GM12878 (cell line): ENCODE measurements at regions of chr17 and their contacts with region 1.

Region 1: DNA sequence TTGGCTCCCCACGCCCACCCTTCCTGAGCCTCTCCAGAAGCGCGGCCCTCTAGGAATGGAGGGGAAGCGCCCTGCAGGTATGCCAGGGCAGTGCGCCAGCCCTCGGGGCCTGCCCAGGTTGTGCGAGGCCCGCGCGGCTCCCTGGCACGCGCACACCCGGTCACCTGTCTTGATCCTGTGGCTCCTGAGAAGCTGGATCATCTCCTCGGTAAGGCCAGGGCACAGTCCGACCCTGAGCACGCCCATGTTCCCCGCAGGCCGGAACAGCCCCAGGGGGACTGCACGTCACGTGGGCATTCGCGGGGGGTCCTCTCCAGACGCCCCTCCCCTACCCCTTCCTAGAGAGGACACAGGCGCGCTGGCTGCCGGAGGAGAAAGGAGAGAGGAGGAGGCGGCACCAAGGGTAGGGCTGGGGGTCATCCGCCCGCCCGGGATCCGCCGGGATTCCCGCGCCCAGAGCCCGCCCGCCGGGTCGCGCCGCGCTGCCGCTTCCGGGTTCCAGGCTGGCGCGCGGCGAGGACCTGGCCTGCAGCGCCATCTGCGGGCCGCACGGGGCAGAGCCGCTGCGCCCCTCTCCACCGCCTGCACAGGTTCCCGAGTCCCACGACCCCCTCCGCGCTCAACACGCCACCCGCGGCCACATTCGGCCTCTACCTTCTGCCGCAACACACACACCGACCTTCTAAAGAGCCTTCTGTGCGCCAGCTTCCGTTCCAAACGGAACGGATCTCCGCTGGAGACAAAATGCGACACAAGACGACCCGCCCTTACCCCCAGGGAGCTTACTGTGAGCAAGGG is at the start of gene RAD51D:
- DNase-seq: peak; percentile 33
- ATAC-seq: peak; percentile 90
- H3K4me3 ChIP-seq: peak within 1 kb of the TSS; percentile 88
- H3K27ac ChIP-seq: peak within 1 kb of the TSS; percentile 84
- H3K4me1 ChIP-seq: no peaks in the 10 kb centered on the region; the same call in 1 of the 2 replicates
- H3K27me3 ChIP-seq: no peaks in the 10 kb centered on the region
- CTCF ChIP-seq: peak; percentile 81 to 95 (median 92); a peak in 5 of 6 replicates
- EP300 ChIP-seq: 0 out of 4 replicates have a peak, but pooled peaks of 1 of the 2 experiments have one; percentile 31
- POLR2A ChIP-seq: peak; percentile 84
- RAD21 ChIP-seq: peak; percentile 83
- polyA plus RNA-seq, gene RAD51D: 2.6 to 4.9 TPM

Region 2: DNA sequence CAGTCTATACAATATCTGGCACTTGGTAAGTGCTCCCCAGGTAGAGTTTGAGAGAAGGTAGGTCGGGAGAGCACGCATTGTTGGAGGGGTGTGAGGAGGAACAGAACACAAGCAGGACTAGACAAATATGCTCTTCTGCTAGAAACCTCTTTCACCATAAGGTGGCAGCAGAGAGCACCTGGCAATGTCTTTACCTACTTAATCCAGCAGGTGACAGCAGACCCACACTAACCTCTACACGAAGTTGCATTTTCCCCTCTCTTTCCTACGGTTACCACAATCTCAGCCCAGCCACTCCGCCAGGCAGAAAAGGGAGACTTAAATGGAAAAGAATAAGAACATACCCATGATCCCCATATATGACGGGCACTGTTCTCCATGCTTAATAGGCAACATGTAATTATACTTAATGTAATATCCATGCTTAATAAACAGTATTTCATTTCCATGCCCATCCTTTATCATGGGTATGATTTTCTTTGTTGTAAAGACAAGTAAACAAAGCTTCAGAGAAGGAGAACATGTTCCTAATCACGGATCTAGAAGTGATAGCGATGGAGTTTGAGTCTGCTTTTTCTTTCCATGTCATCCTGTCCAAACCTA is 919.5 kb before region 1 on chr17:
- CTCF ChIA-PET with region 1: interaction called, 7 read pairs
- POLR2A ChIA-PET with region 1: no interaction called
- RAD21 ChIA-PET with region 1: no interaction called
- SMC1A ChIA-PET with region 1: no interaction called
- in situ Hi-C with region 1: loop called (anchors 25 kb)
- intact Hi-C with region 1: no loop called
- DNase-seq: peak; percentile 36
- ATAC-seq: peak; percentile 91
- H3K4me3 ChIP-seq: no peak overlapping the region
- H3K27ac ChIP-seq: no peak overlapping the region
- H3K4me1 ChIP-seq: no peaks in the 10 kb centered on the region
- H3K27me3 ChIP-seq: no peaks in the 10 kb centered on the region; a peak in 1 of 4 replicates
- CTCF ChIP-seq: peak; percentile 100; a peak in 5 of 6 replicates
- EP300 ChIP-seq: no peak
- POLR2A ChIP-seq: no peak
- RAD21 ChIP-seq: peak; percentile 97

Region 3: DNA sequence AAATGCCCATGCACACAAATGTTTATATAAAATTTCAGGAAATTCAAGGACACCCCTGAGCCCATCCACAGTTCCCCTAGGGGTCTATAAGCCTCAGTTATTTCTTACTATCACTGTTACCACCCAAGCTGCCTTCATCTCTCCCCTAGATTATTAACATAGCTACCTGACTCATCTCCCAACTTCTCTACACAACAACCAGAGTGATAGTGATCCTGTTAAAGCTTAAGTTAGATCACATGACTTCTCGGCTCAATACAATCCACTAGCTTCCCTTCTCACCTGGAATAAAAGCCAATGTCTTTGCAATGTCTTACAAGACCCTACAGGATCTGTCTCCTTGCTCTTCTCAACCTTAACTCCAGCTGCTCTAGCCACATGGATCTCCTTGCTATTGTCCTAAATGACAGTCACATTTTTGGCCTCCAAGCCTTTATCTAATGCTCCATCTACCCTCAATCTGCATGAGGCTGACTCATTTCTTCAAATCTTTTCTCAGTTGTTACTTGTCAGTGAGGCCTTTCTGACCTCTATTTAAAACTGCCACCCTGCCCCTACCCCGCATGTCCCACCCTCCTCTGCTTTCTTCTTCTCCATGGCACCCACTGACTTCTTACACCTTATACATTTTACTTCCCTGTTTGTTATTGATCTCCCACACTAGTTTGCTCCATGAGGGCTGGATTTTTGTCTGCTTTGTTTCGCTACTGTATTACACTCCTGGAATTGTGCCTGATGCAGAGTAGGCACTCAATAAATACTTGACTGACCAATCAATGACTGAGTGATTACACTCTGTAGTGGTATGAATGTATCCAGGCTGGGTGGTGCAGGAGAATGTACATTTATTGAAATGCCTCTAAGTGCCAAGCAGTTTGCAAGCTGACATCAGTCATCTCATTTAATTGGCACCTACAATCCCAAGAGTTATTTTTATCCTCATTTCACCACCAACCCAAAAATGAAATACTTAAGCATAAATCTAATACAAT is 144.5 kb before region 1 on chr17:
- CTCF ChIA-PET with region 1: interaction called, 14 read pairs
- POLR2A ChIA-PET with region 1: interaction called, 7 read pairs
- RAD21 ChIA-PET with region 1: interaction called, 4 read pairs
- SMC1A ChIA-PET with region 1: interaction called, 3 read pairs
- in situ Hi-C with region 1: no loop called
- intact Hi-C with region 1: loop called (anchors 5 kb)
- DNase-seq: no peak
- ATAC-seq: no peak
- H3K4me3 ChIP-seq: no peak overlapping the region
- H3K27ac ChIP-seq: no peak overlapping the region
- H3K4me1 ChIP-seq: peaks cover 6% of the 10 kb centered on the region
- H3K27me3 ChIP-seq: no peaks in the 10 kb centered on the region
- CTCF ChIP-seq: no peak
- EP300 ChIP-seq: no peak
- POLR2A ChIP-seq: no peak
- RAD21 ChIP-seq: no peak

Region 4: DNA sequence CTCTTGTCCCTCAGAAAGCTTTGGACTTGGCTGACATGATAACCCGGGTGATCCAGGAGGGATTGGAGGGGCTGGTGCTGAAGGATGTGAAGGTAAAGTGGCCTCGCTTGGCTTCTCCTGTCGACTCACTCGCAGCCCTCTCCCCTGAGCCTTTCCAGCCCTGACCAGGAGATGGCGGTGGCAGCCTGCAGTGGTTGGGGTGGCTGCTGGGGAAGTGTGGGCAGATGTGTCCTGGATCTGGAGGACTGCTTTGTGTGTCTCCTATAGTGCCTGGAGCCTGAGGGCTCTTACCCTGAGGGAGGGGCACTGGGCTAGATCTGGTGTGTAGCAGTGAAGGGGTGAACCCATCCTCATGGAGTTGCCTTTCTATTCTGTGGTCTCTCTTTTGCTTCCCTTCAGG is 121.4 kb before region 1 on chr17:
- CTCF ChIA-PET with region 1: interaction called, 149 read pairs
- POLR2A ChIA-PET with region 1: interaction called, 3 read pairs
- RAD21 ChIA-PET with region 1: interaction called, 32 read pairs
- SMC1A ChIA-PET with region 1: interaction called, 101 read pairs
- in situ Hi-C with region 1: loop called (anchors 5 kb)
- intact Hi-C with region 1: loop called (anchors 1 kb)
- DNase-seq: peak; percentile 40
- ATAC-seq: peak; percentile 97
- H3K4me3 ChIP-seq: no peak overlapping the region
- H3K27ac ChIP-seq: no peak overlapping the region
- H3K4me1 ChIP-seq: no peaks in the 10 kb centered on the region; the same call in 1 of the 2 replicates
- H3K27me3 ChIP-seq: no peaks in the 10 kb centered on the region
- CTCF ChIP-seq: peak; percentile 94 to 97 (median 97); a peak in 5 of 6 replicates
- EP300 ChIP-seq: no peak
- POLR2A ChIP-seq: no peak
- RAD21 ChIP-seq: peak; percentile 99

Region 5: DNA sequence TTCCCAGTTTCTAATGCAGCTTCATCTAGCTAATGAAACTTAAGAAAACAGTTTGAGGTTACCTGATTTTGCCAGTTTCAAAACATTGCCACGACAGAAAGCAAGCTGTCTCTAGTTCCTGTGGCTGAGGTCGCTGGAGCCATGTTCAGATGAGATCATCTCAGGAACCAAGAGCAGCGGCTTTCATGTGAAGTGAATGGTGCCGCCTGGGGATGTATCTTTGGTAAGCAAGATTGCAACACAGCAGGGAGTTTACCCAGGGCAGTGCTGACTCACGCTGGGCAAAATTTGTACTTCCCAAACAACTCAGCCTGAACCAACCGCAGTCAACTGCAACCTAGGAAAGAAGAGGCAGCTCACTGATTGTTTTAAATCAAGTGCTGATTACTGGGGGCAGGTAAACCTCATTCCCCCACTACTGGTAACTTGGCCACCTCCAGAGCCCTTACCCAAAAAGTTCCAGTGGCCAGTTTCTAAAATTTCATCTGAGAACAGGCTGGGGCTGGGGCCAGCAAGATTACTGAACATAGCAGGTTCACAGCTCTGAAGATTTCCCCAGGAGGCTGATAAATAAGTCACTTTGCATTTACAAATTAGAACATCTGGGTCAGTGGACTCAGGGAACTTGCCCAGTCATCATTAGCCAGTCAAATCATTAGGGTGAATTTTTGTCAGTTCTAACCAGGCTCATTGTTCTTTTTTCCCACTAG is 55.9 kb before region 1 on chr17 and contains the start of gene RFFL:
- CTCF ChIA-PET with region 1: interaction called, 17 read pairs
- POLR2A ChIA-PET with region 1: no interaction called
- RAD21 ChIA-PET with region 1: interaction called, 21 read pairs
- SMC1A ChIA-PET with region 1: interaction called, 16 read pairs
- in situ Hi-C with region 1: no loop called
- intact Hi-C with region 1: loop called (anchors 2 kb)
- DNase-seq: peak; percentile 98
- ATAC-seq: peak; percentile 93
- H3K4me3 ChIP-seq: peak within 1 kb of the TSS; percentile 29; the same call in 1 of the 2 replicates
- H3K27ac ChIP-seq: peak within 1 kb of the TSS; percentile 86
- H3K4me1 ChIP-seq: peaks cover 23% of the 10 kb centered on the region
- H3K27me3 ChIP-seq: no peaks in the 10 kb centered on the region
- CTCF ChIP-seq: peak; percentile 16 to 48 (median 36); a peak in 3 of 6 replicates
- EP300 ChIP-seq: peak; percentile 80 to 86
- POLR2A ChIP-seq: peak; percentile 54
- RAD21 ChIP-seq: peak; percentile 45
- polyA plus RNA-seq, gene RFFL: 4.7 to 6.7 TPM

Region 6: GRCh38 chr17:35141681-35142466 is 22.3 kb after region 1 on chr17 and contains the start of gene NLE1:
- CTCF ChIA-PET with region 1: interaction called, 18 read pairs
- POLR2A ChIA-PET with region 1: interaction called, 7 read pairs
- RAD21 ChIA-PET with region 1: no interaction called
- SMC1A ChIA-PET with region 1: no interaction called
- in situ Hi-C with region 1: no loop called
- intact Hi-C with region 1: no loop called
- DNase-seq: peak; percentile 36
- ATAC-seq: peak; percentile 95
- H3K4me3 ChIP-seq: peak within 1 kb of the TSS; percentile 98
- H3K27ac ChIP-seq: peak within 1 kb of the TSS; percentile 86
- H3K4me1 ChIP-seq: no peaks in the 10 kb centered on the region
- H3K27me3 ChIP-seq: no peaks in the 10 kb centered on the region
- CTCF ChIP-seq: peak; percentile 87 to 97 (median 92)
- EP300 ChIP-seq: no peak
- POLR2A ChIP-seq: peak; percentile 90
- RAD21 ChIP-seq: 0 out of 2 replicates have a peak, but pooled peaks have one; percentile 15
- polyA plus RNA-seq, gene NLE1: 2.4 to 5.5 TPM